ENCODE measurements at regions of chr18 and their contacts with region 1.

Region 1: DNA sequence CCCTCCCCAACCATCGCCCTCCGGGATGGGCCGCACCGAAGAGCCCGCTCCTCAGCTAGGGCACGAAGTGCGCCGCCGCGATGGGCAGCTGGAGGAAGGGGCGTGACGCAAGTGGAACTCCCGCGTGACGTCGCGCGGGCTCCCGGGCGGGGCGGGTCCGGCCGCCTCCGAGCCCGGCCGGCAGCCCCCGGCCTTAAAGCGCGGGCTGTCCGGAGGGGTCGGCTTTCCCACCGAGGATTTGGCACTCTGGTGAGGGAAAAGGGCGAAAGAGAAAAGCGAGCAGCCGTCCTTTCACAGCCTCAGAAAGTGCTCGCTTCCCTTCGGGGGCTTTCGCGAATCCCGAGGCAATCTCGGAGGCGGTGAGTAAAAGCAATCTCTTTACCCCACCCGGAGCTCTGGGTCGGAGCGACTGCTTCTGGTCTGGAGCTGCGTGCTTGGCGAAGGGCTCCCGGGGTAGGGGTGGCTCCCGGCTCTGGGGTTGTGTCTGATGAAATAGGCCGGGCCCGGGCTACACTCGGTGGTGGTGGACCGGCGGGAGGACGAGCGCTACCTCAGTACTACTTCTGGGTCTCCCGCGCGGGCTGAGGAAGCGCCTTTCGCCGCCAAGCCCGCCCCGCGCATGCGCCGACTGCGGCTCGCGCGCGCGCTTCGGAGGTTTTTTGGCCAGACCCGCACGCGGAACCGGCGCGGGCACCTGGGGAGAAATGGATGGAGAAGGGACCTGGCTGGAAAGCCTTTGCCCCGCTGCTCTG is at the start of gene RBBP8:
- DNase-seq: peak; percentile 67 to 90
- H3K4me3 ChIP-seq: peak within 1 kb of the TSS; percentile 54 to 90 (median 84)
- H3K27ac ChIP-seq: peak within 1 kb of the TSS; percentile 86
- H3K4me1 ChIP-seq: peaks cover 0 to 2% (median 0%) of the 10 kb centered on the region in 4 experiments; a peak in 1 of 7 replicates
- H3K27me3 ChIP-seq: no peaks in the 10 kb centered on the region
- CTCF ChIP-seq: 0 out of 4 replicates have a peak, but pooled peaks of 1 of the 3 experiments have one; percentile 2
- EP300 ChIP-seq: no peak
- POLR2A ChIP-seq: peak in 1 of 2 experiments; percentile 29; a peak in 1 of 3 replicates
- RAD21 ChIP-seq: 0 out of 4 replicates have a peak, but pooled peaks of 1 of the 2 experiments have one; percentile 5
- total RNA-seq, gene RBBP8: 63.4 and 65.8 TPM in 2 replicates

Region 2: DNA sequence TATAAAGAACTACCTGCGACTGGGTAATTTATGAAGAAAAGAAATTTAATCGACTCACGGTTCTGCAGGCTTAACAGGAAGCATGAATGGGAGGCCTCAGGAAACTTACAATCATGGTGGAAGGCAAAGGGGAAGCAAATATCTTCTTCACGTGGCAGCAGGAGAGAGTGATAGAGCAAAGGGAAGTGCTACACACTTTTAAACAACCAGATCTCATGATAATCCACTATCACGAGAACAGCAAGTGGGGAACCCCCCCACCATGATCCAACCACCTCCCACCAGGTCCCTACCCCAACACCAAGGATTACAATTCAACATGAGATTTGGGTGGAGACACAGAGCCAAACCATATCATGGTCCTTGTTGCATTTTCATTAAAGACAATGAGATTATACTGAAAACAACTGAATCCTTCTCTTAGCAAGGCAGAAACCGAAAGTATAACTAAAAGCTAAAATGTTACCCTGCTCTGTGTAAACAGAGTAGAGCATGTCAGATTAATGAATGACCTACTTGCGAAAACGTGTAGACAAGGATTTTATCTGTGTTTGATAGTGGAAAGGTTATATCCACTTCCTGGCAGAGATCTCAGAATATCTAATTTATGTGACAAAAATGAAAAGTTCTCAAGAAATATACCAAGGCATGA is 60.4 kb before region 1 on chr18:
- CTCF ChIA-PET with region 1: no interaction called
- POLR2A ChIA-PET with region 1: no interaction called
- DNase-seq: no peak
- H3K4me3 ChIP-seq: no peak overlapping the region
- H3K27ac ChIP-seq: no peak overlapping the region
- H3K4me1 ChIP-seq: no peaks in the 10 kb centered on the region
- H3K27me3 ChIP-seq: no peaks in the 10 kb centered on the region
- CTCF ChIP-seq: no peak
- EP300 ChIP-seq: no peak
- POLR2A ChIP-seq: no peak
- RAD21 ChIP-seq: no peak

Region 3: GRCh38 chr18:22913857-22914256 is 19.5 kb before region 1 on chr18:
- CTCF ChIA-PET with region 1: interaction called, 29 read pairs
- POLR2A ChIA-PET with region 1: interaction called, 10 read pairs
- DNase-seq: no peak
- H3K4me3 ChIP-seq: peak overlapping the region in 1 of 4 experiments; percentile 44; a peak in 2 of 8 replicates
- H3K27ac ChIP-seq: no peak overlapping the region
- H3K4me1 ChIP-seq: peaks cover 3 to 24% (median 12%) of the 10 kb centered on the region in 4 experiments; a peak in 5 of 7 replicates
- H3K27me3 ChIP-seq: no peaks in the 10 kb centered on the region
- CTCF ChIP-seq: no peak
- EP300 ChIP-seq: peak in 1 of 2 experiments; percentile 84; a peak in 1 of 3 replicates
- POLR2A ChIP-seq: no peak
- RAD21 ChIP-seq: no peak; a peak in 1 of 4 replicates

Region 4: GRCh38 chr18:22921772-22922171 is 11.6 kb before region 1 on chr18:
- CTCF ChIA-PET with region 1: interaction called, 29 read pairs
- POLR2A ChIA-PET with region 1: interaction called, 16 read pairs
- DNase-seq: no peak
- H3K4me3 ChIP-seq: no peak overlapping the region
- H3K27ac ChIP-seq: no peak overlapping the region
- H3K4me1 ChIP-seq: no peaks in the 10 kb centered on the region
- H3K27me3 ChIP-seq: no peaks in the 10 kb centered on the region
- CTCF ChIP-seq: no peak
- EP300 ChIP-seq: no peak
- POLR2A ChIP-seq: no peak
- RAD21 ChIP-seq: no peak

Region 5: DNA sequence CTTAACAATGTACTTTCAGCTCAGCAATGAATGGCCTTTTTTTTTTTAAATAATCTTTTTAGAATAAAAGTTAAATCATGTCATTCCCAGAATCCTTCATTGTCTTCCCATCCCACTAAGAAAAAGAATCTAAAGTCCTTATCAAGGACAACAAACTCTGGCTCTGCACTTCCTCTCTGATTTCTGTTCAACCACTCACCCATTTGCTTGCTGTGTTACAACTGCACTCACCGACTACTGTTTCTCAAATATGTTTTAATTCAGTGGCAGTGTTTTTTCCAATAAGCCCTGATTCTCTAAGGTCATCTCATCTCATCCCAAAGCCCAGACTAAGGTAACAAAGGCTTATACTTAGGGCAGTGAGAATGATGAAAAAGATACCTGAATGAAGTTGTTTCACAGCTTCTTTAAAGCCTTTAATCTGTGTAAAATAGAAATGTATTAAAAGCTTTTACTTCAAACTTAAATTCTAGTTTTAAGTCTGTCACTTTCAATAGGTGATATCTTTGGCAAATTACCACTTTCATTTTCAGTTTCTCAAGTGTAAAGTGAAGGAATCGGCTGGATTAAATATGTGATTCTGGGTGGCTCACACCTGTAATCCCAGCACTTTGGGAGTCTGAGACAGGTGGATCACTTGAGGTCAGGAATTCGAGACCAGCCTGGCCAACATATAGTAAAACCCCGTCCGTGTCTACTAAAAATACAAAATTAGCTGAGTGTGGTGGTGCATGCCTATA is 87.3 kb after region 1 on chr18:
- CTCF ChIA-PET with region 1: no interaction called
- POLR2A ChIA-PET with region 1: no interaction called
- DNase-seq: no peak
- H3K4me3 ChIP-seq: no peak overlapping the region
- H3K27ac ChIP-seq: no peak overlapping the region
- H3K4me1 ChIP-seq: no peaks in the 10 kb centered on the region
- H3K27me3 ChIP-seq: no peaks in the 10 kb centered on the region
- CTCF ChIP-seq: no peak
- EP300 ChIP-seq: no peak
- POLR2A ChIP-seq: no peak
- RAD21 ChIP-seq: no peak

Measured in H1 (cell line).